Heart left ventricle (tissue), 16 donors: ENCODE measurements at regions of chr9 and their contacts with region 1.

Region 1: DNA sequence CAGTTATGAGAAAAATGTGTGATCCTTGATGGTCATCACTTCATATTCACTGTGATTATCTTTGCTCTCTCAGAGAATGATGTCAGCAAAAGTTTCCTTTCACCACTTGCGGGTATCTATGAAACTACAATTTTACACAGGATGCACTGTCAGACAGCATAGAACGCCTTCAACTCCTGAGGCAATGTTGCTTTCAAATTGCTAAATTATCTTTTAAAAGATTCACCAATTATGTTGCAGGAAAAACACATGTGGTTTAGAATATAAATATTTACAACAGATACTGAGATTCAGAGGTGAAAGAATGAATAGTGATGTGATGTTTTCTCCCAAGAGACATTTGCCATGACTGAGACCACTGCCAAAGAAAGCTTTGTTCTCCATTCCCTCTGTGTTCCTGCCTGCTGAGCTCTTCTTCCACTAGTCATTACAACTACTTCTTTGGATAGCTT is 879.8 kb upstream of the DMAC1 start:
- DNase-seq: no peak
- ATAC-seq: no peak
- H3K4me3 ChIP-seq: no peak overlapping the region
- H3K27ac ChIP-seq: no peak overlapping the region
- H3K4me1 ChIP-seq: peaks cover 0 to 26% (median 8%) of the 10 kb centered on the region in 12 donors
- H3K27me3 ChIP-seq: no peaks in the 10 kb centered on the region
- CTCF ChIP-seq: no peak
- POLR2A ChIP-seq: no peak

Region 2: GRCh38 chr9:8857926-8858595 is 178.7 kb after region 1 on chr9:
- intact Hi-C with region 1: loop called in 1 of 10 experiments (anchors 10 kb)
- DNase-seq: peak; percentile 59 to 83 (median 73)
- ATAC-seq: peak; percentile 30 to 86 (median 83)
- H3K4me3 ChIP-seq: peak overlapping the region; percentile 59 to 89 (median 66)
- H3K27ac ChIP-seq: peak overlapping the region in 6 of 12 donors; percentile 44 to 63 (median 54)
- H3K4me1 ChIP-seq: peaks cover 0 to 19% (median 3%) of the 10 kb centered on the region in 12 donors
- H3K27me3 ChIP-seq: peaks cover 0 to 40% (median 0%) of the 10 kb centered on the region in 9 donors
- CTCF ChIP-seq: no peak
- POLR2A ChIP-seq: no peak